ENCODE measurements at regions of chr4 and their contacts with region 1.

Region 1: GRCh38 chr4:83074086-83074704 is 39.2 kb downstream of the COPS4 start:
- DNase-seq: peak in 1 of 3 donors; percentile 87
- ATAC-seq: peak; percentile 91
- H3K4me3 ChIP-seq: no peak overlapping the region
- H3K4me1 ChIP-seq: peaks cover 3% of the 10 kb centered on the region
- CTCF ChIP-seq: peak; percentile 54

Region 2: DNA sequence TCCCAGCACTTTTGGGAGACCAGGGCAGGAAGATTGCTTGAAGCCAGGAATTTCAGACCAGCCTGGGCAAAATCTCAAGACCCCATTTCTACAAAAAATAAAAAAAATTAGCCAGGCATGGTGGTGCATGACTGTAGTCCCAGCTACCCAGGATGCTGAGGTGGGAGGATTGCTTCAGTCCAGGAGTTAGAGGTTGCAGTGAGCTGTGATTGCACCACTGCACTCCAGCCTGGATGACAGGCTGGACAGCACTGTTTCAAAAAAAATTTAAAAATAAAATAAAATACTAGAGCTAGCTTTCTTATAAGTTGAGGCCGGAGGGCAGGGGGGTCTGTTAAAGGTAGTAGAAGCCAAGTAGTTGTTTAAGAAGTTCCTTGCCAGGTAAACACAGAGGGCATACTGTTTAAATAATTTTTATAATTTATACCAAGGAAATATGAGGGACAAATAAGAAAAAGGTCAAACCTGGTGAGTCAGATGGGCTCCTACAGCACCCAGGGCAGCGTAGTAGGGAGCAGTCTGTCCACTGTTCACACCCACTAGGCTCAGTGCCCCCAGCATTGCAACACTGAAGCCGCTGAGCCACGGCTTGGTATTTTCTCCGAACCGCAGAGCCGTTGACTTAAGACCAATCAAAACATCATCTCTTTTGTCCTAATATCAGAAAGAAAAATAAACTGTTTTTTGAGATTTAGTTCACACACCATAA is 193.1 kb after region 1 on chr4:
- intact Hi-C with region 1: loop called in 1 of 2 experiments (anchors 10 kb)
- DNase-seq: no peak
- ATAC-seq: no peak
- H3K4me3 ChIP-seq: no peak overlapping the region
- H3K4me1 ChIP-seq: peaks cover 4% of the 10 kb centered on the region
- CTCF ChIP-seq: no peak

Region 3: GRCh38 chr4:83284193-83285054 is 210.2 kb after region 1 on chr4 and contains the start of gene COQ2:
- intact Hi-C with region 1: loop called in 1 of 2 experiments (anchors 10 kb)
- DNase-seq: peak; percentile 97 to 98 (median 97)
- ATAC-seq: peak; percentile 94
- H3K4me3 ChIP-seq: peak within 1 kb of the TSS; percentile 50
- H3K4me1 ChIP-seq: peaks cover 10% of the 10 kb centered on the region
- CTCF ChIP-seq: peak; percentile 31
- total RNA-seq, gene COQ2: 12.5 to 21.6 (median 18.1) TPM

Measured in mucosa of descending colon (tissue), 3 donors.